WTC11 (cell line): ENCODE measurements at regions of chr6 and their contacts with region 1.

Region 1: DNA sequence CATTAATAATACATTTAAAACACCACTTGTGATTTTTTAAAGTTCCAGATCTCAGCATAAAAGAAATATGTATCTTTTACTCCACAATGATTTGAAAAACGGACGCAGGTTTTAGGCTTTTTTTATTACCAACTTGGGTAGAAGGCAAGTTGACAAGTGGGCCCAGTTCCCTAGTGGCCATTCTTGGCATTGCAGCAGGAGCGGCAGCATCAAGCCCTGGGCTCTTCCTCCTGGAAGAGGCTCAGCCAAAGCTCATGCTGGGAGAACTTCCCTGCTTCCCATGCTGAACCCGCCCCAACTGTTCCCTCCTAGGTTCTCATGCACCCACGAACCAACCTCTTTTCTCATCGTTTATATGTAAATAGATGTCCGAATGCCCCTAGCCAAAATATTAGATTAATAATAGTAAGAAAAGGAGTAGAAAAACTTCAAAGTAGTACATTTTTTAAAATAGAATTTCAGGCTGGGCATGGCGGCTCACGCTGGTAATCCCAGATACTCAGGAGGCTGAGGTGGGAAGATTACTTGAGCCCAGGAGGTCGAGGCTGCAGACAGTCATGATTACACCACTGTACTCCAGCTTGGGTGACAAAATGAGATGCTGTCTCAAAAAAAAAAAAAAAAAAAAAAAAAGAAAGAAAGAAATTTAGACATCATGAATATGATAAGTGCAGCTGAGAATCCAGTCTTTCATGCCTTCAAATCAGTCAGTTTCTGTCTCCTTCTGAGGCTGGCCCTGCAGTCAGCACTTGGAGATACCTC is 18.2 kb upstream of the MYB start:
- DNase-seq: peak; percentile 89
- ATAC-seq: peak; percentile 98
- H3K4me3 Mint-ChIP-seq: no peak overlapping the region
- H3K27ac Mint-ChIP-seq: no peak overlapping the region
- H3K4me1 Mint-ChIP-seq: peaks cover 7% of the 10 kb centered on the region
- H3K27me3 Mint-ChIP-seq: no peaks in the 10 kb centered on the region
- CTCF ChIP-seq: peak; percentile 96

Region 2: DNA sequence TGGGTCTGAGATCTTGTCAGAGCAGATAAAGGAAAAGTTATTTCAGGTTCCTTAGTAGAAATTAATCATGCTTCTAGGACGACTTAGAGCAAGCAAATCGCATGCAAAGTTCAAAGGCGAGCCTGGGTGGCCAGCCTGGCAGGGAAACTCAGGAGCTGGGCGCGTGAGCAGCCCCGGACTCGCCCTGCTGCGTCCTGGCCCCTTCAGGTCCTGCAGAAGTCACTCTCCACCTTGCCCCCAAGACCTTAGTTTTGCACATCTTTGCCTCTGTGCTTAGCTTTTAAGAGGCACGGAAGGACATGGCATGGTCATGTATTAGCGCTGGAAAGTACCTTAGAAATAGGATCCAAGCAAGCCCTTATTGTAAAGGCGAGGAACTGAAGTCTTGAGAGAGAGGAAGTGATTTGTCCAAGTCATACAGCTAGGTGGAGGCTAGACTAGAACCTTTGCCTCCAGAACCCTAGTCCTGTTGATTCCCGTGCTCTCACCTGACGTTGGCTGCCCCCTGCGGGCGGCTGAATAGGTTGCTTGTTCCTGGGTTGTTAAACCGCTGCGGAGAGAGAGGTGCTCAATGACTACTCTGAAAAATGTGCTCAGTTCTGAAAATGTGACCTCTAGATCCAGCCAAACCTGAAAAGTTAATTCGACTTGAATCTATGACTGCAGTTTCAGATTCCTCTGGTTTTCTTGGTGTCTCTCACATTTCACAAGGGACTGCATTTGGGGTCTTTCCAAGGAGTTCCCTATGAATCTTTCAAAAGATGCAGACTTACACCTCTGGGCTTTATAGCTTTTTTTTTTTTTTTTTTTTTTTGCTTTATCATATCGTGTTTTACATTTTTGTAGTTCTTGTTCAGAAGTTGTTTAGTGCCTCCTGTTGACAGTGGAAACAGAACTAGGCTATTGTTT is 20.9 kb after region 1 on chr6:
- CTCF ChIA-PET with region 1: interaction called, 24 read pairs
- POLR2A ChIA-PET with region 1: no interaction called
- DNase-seq: peak; percentile 79
- ATAC-seq: peak; percentile 38
- H3K4me3 Mint-ChIP-seq: peak overlapping the region; percentile 93
- H3K27ac Mint-ChIP-seq: no peak overlapping the region
- H3K4me1 Mint-ChIP-seq: peaks cover 18% of the 10 kb centered on the region
- H3K27me3 Mint-ChIP-seq: peaks cover 37% of the 10 kb centered on the region
- CTCF ChIP-seq: 0 out of 2 replicates have a peak, but pooled peaks have one; percentile 4